ENCODE measurements at regions of chr21 and their contacts with region 1.

Region 1: GRCh38 chr21:42652527-42653230 is 742 bp upstream of the PDE9A start:
- DNase-seq: peak; percentile 56
- H3K4me3 ChIP-seq: peak overlapping the region; percentile 33 to 80 (median 46)
- H3K27ac ChIP-seq: peak overlapping the region; percentile 85 to 92 (median 86)
- H3K4me1 ChIP-seq: peaks cover 4 to 65% (median 44%) of the 10 kb centered on the region in 4 donors
- H3K27me3 ChIP-seq: no peaks in the 10 kb centered on the region
- CTCF ChIP-seq: peak; percentile 29 to 69 (median 47)
- EP300 ChIP-seq: no peak
- POLR2A ChIP-seq: no peak

Region 2: DNA sequence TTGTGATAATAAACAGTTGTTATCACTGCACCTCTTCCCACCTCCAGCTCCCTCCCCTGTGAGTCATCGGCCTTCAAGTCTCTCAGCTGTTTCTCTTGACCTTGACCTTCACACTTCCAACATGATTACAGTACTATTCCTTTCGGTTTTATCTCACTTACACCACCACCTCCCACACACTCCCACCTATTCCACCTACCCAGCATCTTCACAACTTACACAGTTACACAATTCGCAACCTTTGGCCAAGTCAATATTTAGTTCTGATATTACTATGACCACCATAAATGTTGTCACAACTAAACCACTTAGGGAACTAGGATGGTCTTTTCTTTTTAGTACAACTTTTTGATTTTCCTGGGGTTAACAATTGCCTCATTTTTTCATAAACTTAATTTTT is 946.0 kb before region 1 on chr21:
- in situ Hi-C with region 1: no loop called
- intact Hi-C with region 1: no loop called
- DNase-seq: peak; percentile 69
- H3K4me3 ChIP-seq: no peak overlapping the region
- H3K27ac ChIP-seq: peak overlapping the region; percentile 74 to 78 (median 76)
- H3K4me1 ChIP-seq: peaks cover 12 to 54% (median 37%) of the 10 kb centered on the region in 4 donors
- H3K27me3 ChIP-seq: peaks cover 2% of the 10 kb centered on the region
- CTCF ChIP-seq: no peak
- EP300 ChIP-seq: no peak
- POLR2A ChIP-seq: peak; percentile 42

Region 3: DNA sequence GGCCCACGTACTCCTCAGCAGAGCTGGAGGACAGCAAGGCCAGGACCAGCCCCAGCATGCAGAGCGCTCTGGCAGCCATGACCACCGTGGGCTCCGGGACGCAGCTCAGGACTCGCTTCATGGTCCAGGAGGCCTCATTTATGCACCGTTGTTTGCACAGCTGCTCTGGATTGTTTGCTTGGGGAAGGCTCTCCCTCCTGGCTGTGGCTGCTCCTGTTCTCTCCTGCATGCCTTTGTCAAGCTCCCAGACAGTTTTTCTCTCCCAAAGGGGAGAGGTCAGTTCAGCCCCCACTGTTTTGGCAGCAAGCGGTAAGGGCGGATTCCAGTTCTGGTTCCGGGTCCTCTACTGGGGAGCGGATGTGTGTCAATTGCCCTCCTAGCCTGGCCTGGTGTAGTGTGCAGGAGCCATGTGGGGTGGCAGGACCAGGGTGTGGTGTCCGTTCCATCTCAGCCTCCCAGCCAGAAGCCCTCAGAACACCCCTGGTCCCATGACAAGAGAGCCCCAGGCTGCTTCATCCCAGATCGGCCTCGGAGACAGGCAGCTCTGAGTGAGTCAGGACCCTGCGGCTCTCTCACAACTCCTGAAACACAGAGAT is 337.3 kb before region 1 on chr21 and contains the start of gene TFF3:
- in situ Hi-C with region 1: no loop called
- intact Hi-C with region 1: no loop called
- DNase-seq: peak; percentile 70
- H3K4me3 ChIP-seq: peak within 1 kb of the TSS in 3 of 4 donors; percentile 6 to 36 (median 28)
- H3K27ac ChIP-seq: peak within 1 kb of the TSS; percentile 79 to 87 (median 84)
- H3K4me1 ChIP-seq: peaks cover 9 to 64% (median 37%) of the 10 kb centered on the region in 4 donors
- H3K27me3 ChIP-seq: no peaks in the 10 kb centered on the region
- CTCF ChIP-seq: no peak
- EP300 ChIP-seq: no peak
- POLR2A ChIP-seq: peak; percentile 82
- total RNA-seq, gene TFF3: 164 to 2,581 (median 367) TPM

Region 4: GRCh38 chr21:42754270-42754933 is 101.7 kb after region 1 on chr21:
- in situ Hi-C with region 1: no loop called
- intact Hi-C with region 1: loop called (anchors 5 kb)
- DNase-seq: no peak
- H3K4me3 ChIP-seq: no peak overlapping the region
- H3K27ac ChIP-seq: no peak overlapping the region
- H3K4me1 ChIP-seq: peaks cover 0 to 4% (median 2%) of the 10 kb centered on the region in 4 donors
- H3K27me3 ChIP-seq: no peaks in the 10 kb centered on the region
- CTCF ChIP-seq: no peak
- EP300 ChIP-seq: no peak
- POLR2A ChIP-seq: no peak

Region 5: GRCh38 chr21:42818328-42818749 is 165.7 kb after region 1 on chr21:
- in situ Hi-C with region 1: loop called in 1 of 4 experiments (anchors 10 kb)
- intact Hi-C with region 1: loop called (anchors 10 kb)
- DNase-seq: peak; percentile 73
- H3K4me3 ChIP-seq: no peak overlapping the region
- H3K27ac ChIP-seq: no peak overlapping the region
- H3K4me1 ChIP-seq: no peaks in the 10 kb centered on the region
- H3K27me3 ChIP-seq: peaks cover 1% of the 10 kb centered on the region
- CTCF ChIP-seq: peak; percentile 89 to 94 (median 93)
- EP300 ChIP-seq: no peak
- POLR2A ChIP-seq: no peak